Activated naive CD4-positive, alpha-beta T cell treated with anti-CD3 and anti-CD28 coated beads, Interleukin-2, amount 10 ng/mL, durations not matched to agents 7 days and 5 days (primary cell): ENCODE measurements at regions of chr5 and their contacts with region 1.

Region 1: GRCh38 chr5:95781101-95781583 is 41.4 kb downstream of the GLRX start:
- DNase-seq: peak; percentile 81
- H3K4me3 Mint-ChIP-seq: peak overlapping the region; percentile 47
- H3K27ac Mint-ChIP-seq: peak overlapping the region; percentile 0
- H3K4me1 Mint-ChIP-seq: peaks cover 26% of the 10 kb centered on the region
- H3K27me3 Mint-ChIP-seq: no peaks in the 10 kb centered on the region

Region 2: DNA sequence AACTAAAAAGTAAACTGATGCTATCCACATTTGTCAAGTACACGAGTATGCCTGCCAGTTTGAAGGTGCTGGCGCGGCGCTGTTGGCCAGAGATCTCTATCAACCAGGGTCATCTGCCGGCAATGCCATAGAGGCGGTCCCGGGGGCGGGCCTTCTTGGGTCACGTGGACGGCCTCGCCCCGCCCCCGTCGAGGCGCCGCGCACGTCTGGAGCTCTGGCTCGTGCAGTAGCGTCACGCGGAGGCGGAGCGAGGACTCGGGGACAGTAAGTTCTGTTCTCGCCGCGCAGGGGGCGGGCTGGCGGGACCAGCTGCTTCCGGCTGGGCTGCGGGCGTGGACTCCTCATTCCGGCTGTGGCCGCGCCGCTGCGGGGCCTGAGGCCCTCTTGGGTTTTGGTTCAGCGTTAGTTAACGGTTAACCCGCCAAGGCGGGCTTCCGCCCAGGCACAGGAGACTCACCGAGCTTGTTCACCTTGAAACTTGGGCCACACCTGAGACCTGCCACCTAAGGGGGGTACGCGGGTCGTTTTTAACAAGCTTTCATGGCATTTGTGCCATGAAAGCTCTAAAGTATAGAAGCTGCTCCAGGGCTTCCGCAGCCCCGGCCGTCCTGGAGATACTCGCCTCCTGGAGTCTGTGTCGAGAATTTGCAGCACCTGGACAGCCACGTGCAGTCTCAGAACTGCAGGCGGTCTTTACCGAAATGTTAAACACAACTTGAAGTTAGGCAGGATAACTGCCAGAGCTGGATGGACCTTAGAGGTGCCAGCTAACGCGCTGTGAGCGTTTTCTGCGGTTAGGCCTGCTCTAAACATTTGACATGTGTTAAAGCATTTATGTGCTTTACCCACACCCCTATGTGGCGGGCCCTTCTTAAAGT is 134.3 kb before region 1 on chr5 and contains the start of gene RFESD:
- CTCF ChIA-PET with region 1: interaction called, 22 read pairs
- DNase-seq: peak; percentile 98
- H3K4me3 Mint-ChIP-seq: peak within 1 kb of the TSS; percentile 77
- H3K27ac Mint-ChIP-seq: peak within 1 kb of the TSS; percentile 95
- H3K4me1 Mint-ChIP-seq: peaks cover 45% of the 10 kb centered on the region
- H3K27me3 Mint-ChIP-seq: no peaks in the 10 kb centered on the region

Region 3: GRCh38 chr5:95697781-95698681 is 83.1 kb before region 1 on chr5:
- CTCF ChIA-PET with region 1: no interaction called
- DNase-seq: no peak
- H3K4me3 Mint-ChIP-seq: no peak overlapping the region
- H3K27ac Mint-ChIP-seq: no peak overlapping the region
- H3K4me1 Mint-ChIP-seq: no peaks in the 10 kb centered on the region
- H3K27me3 Mint-ChIP-seq: peaks cover 34% of the 10 kb centered on the region

Region 4: GRCh38 chr5:95730730-95731570 is 50.2 kb before region 1 on chr5 and contains the start of gene RHOBTB3:
- CTCF ChIA-PET with region 1: interaction called, 13 read pairs
- DNase-seq: peak; percentile 59
- H3K4me3 Mint-ChIP-seq: peak within 1 kb of the TSS; percentile 69
- H3K27ac Mint-ChIP-seq: no peak within 1 kb of the TSS
- H3K4me1 Mint-ChIP-seq: peaks cover 52% of the 10 kb centered on the region
- H3K27me3 Mint-ChIP-seq: peaks cover 44% of the 10 kb centered on the region

Region 5: DNA sequence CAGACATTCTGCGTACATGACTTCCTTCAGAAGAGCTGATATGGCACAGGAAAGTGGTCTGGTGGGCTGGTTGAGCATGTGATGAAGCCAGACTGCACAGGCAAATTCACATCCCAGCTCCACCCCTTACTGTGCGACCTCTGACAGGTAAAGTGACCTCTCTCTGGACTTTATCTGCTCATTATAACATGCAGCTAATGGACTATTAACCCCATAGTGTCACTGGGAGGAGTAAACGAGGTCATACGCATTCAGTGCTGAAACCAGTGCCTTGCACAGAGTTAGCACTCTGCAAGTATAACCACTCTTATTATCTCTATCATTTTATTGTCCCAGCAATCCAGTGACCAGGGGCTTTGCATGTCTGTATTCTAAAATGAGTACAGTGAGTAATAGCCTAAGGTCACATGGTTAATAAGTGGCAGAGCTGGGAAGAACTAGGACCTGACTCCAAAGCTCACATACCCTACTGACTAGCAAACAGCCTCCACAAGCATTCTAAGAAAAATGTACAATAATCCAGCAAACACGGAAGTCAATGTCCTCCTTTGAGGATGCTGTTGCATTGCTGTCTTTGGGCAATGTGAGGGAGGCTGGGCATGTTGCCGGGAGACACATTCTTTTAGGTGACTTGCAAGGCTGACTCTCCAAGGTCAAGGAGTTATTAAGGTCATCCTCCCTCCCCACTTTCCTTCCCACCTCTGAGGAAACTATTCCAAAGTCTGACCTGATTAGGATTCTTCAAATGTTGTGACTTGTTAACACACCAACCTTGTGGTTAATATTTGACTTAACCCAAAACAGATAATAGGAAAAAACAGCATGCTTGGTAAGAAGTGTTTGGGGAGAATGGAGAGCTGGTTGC is 22.4 kb after region 1 on chr5:
- CTCF ChIA-PET with region 1: interaction called, 40 read pairs
- DNase-seq: no peak
- H3K4me3 Mint-ChIP-seq: no peak overlapping the region
- H3K27ac Mint-ChIP-seq: no peak overlapping the region
- H3K4me1 Mint-ChIP-seq: peaks cover 25% of the 10 kb centered on the region
- H3K27me3 Mint-ChIP-seq: no peaks in the 10 kb centered on the region

Region 6: DNA sequence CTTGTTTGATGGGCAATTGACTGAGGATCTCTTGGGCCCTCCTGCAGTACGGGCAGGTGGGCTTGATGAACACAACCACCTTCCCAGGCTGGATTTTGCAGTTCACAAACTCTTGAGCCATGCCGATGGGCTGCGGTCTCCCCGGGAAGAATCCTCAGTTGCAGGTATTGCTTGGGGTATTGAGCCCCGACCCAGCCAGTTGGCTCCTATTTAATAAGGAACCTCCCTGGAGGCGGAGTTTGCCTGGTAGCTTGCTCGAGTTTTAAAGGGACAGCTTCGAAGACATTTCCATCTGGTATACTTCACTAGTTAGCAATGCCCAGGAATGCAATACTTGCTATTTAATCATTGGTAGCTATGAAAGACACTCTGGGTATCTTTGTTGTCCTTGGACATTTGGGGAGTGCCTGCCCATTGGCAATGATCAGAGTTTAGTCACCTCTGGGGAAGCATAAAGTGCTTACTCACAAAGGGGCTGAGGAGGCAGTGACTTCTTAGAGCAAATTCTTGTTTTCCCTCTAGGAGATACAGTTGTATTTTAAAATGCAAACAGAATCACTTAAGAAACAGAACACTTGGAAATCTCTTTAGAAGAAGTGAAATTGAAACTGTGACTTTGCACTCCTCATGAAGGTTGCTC is 41.5 kb after region 1 on chr5 and contains the start of gene GLRX:
- CTCF ChIA-PET with region 1: interaction called, 29 read pairs
- DNase-seq: peak; percentile 79
- H3K4me3 Mint-ChIP-seq: peak within 1 kb of the TSS; percentile 96
- H3K27ac Mint-ChIP-seq: peak within 1 kb of the TSS; percentile 97
- H3K4me1 Mint-ChIP-seq: peaks cover 72% of the 10 kb centered on the region
- H3K27me3 Mint-ChIP-seq: no peaks in the 10 kb centered on the region

Region 7: GRCh38 chr5:95853490-95853889 is 72.3 kb after region 1 on chr5:
- CTCF ChIA-PET with region 1: interaction called, 377 read pairs
- DNase-seq: no peak
- H3K4me3 Mint-ChIP-seq: no peak overlapping the region
- H3K27ac Mint-ChIP-seq: no peak overlapping the region
- H3K4me1 Mint-ChIP-seq: peaks cover 5% of the 10 kb centered on the region
- H3K27me3 Mint-ChIP-seq: no peaks in the 10 kb centered on the region

Region 8: GRCh38 chr5:95907067-95907705 is 126.0 kb after region 1 on chr5:
- CTCF ChIA-PET with region 1: no interaction called
- DNase-seq: no peak
- H3K4me3 Mint-ChIP-seq: no peak overlapping the region
- H3K27ac Mint-ChIP-seq: no peak overlapping the region
- H3K4me1 Mint-ChIP-seq: peaks cover 8% of the 10 kb centered on the region
- H3K27me3 Mint-ChIP-seq: no peaks in the 10 kb centered on the region